ENCODE measurements at regions of chr5 and their contacts with region 1.

Region 1: DNA sequence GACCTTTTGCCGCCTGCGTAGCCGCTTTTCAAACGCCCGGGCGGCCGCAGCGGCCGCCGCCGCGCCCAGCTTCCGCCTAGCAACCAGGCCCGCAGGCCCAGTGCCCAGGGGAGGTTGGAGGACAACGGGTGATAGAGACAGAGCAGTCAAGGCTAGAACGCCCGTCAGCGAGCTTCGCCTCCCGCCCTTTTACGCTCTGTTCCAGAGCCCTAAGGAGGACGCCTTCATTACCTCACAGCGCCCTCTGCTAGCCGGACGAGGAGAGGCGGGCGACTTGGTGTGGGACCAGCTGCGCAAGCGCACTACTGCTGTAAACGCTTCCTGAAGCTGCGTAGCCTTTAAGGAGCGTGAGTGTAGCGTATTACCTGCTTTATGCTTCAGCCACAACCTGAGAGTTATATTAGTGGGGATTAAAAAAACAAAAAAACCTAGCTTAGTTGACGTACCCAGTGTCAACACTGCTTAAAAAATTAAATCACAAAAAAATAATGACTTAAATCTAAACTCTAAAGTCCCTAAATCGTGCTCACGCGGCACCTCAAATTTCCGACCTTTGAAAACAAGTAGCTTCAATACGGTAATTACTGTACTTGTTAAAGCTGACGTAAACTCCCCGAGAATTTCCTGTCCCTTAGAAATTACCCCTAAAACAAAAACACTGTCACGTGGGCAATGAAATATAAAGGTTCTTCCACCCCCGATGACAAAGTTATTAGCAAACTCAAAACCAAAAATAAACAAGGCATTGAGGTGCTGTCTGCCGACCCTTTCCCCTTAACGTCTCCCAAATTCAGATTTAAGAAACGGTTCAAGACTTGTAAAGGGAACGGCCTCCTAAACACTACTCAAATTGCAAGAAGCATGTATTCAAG is at the start of gene CEP120:
- DNase-seq: peak; percentile 99
- ATAC-seq: peak; percentile 97
- total RNA-seq, gene CEP120: 8.8 to 9.2 TPM

Region 2: DNA sequence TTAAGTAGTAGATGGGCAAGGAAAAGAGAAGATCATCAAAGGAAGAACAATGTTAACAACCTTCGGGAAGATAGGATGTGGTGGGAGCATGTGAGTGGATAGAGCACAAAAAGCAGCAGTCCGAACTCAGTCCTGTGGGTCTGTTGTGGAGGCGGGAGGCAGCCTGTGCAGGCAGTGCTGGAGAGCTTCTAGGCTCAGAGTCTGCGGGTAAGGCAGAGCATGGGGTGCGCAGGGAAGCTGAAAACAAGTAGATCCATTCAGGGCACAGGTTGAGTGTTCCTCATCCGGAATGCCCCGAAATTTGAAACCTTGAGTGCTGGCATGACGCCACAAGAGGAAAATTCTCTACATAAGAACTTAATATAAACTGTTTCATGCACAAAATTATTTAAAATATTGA is 471.9 kb before region 1 on chr5:
- intact Hi-C with region 1: no loop called
- DNase-seq: no peak
- ATAC-seq: no peak

Region 3: DNA sequence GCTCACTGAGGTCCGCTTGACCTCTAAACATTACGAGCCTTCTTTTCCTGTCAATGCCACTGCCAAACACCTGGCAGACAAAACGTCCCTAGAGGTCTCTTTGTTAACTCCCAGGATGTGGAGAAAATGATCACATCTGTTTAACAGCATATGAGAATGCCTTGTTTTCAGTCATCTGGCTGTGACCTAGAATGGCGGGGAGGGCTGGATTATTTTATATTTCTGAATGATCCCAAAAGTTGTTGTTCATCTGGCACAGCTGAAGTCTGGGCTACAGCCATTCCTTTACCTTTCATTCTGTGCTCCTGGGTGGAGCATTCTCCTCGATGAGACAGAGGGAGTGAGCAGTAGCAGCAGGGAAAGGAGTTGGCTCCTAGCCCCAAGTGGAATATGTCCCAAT is 196.3 kb before region 1 on chr5:
- intact Hi-C with region 1: no loop called
- DNase-seq: no peak
- ATAC-seq: no peak

Region 4: GRCh38 chr5:123518111-123518510 is 94.6 kb after region 1 on chr5:
- intact Hi-C with region 1: loop called in 1 of 2 experiments (anchors 5 kb)
- DNase-seq: no peak
- ATAC-seq: peak; percentile 84

Region 5: GRCh38 chr5:123605822-123606221 is 182.3 kb after region 1 on chr5:
- intact Hi-C with region 1: loop called in 1 of 2 experiments (anchors 10 kb)
- DNase-seq: no peak
- ATAC-seq: no peak

Measured in left colon (tissue), 2 donors.